GM13976 (cell line): ENCODE measurements at regions of chr2 and their contacts with region 1.

Region 1: GRCh38 chr2:215949991-215950404 is 63.4 kb downstream of the MREG start:
- DNase-seq: peak; percentile 56
- CTCF ChIP-seq: peak; percentile 13

Region 2: GRCh38 chr2:216015722-216016464 is 65.9 kb after region 1 on chr2:
- in situ Hi-C with region 1: loop called (anchors 5 kb)
- DNase-seq: peak; percentile 65
- CTCF ChIP-seq: no peak